Transverse colon (tissue), 4 donors: ENCODE measurements at regions of chr3 and their contacts with region 1.

Region 1: DNA sequence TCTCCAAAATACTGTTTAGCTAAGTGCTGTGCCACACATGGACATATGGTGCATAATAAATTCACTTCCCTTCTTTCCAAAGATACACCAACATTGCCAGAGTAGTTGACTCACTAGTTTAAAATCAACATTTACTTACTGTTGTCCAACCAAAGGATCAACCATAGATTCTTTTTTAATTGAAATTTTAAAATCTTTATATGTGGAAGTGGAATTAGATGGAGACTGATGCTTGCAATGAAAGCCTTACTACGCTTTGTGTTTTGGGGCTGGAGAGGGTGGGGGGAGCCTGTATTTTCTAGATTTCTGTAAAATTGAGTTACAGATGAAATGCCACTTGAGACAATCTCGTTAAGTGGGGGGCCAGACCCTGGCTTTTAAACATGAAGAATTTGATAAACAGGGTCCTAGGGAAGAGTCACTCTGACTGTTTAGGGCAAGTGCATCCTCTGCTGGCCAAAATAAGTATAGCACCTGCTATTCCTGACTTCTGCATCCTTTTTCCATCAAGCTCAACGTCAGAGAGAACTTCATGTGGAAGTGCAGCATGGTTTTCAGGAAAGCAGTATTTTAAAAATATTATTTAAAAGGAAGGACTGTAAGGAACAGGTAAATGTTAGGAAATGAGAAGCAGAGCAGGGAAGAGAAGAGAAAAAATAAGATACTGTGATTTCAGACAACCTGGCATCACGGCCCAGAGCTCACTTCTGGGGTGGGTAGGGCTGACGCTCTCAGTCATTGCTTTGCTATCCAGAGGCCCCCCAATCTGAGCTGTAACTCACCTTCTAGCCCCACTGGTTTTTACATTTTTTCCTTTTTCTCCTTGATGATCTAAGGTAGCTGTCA is 76.7 kb downstream of the BOC start:
- DNase-seq: peak; percentile 53
- H3K4me3 ChIP-seq: no peak overlapping the region
- H3K27ac ChIP-seq: peak overlapping the region; percentile 13 to 72 (median 55)
- H3K4me1 ChIP-seq: peaks cover 0 to 8% (median 3%) of the 10 kb centered on the region in 4 donors
- H3K27me3 ChIP-seq: no peaks in the 10 kb centered on the region
- CTCF ChIP-seq: peak; percentile 97 to 100 (median 99)
- EP300 ChIP-seq: no peak
- POLR2A ChIP-seq: no peak

Region 2: DNA sequence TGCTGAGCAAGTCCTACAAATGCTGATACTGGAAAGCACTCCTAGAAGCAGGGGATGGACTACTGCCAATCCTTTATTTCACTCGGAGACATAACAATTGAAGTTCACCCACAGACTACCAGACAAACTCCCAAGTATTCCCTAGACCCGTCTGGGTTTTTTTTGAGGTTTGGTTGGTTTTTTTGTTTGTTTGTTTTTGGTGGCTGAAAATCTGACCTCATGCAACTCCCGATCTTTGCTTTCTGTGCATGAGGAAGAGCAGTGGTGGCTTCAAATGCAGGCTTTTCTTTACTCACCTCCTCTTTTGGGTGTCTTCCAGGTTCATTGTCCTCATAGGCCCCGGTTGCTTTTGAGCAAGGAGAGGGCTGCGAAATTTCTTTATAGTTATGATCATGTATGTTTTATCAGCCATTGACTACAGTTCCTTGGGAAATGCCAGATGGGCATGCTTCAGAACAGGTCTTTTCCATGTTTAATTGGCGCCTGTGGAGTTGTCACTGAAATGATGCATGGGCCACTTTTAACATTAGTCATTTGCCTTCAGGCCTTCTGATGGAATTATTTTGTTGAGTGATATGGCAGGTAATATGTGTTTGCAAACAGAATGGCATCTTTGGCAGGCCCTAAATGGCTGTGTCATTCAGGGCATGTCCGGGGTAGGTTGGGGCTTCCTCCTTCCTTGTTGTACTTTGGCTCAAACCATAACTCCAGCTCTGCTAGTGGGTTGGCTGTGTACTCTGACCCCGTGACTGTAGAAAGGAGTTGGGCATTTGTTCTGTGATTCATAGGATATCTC is 1611.6 kb before region 1 on chr3:
- in situ Hi-C with region 1: no loop called
- intact Hi-C with region 1: no loop called
- DNase-seq: peak; percentile 81
- H3K4me3 ChIP-seq: peak overlapping the region in 1 of 4 donors; percentile 17
- H3K27ac ChIP-seq: peak overlapping the region; percentile 69 to 81 (median 78)
- H3K4me1 ChIP-seq: peaks cover 3 to 37% (median 30%) of the 10 kb centered on the region in 4 donors
- H3K27me3 ChIP-seq: no peaks in the 10 kb centered on the region
- CTCF ChIP-seq: no peak
- EP300 ChIP-seq: no peak
- POLR2A ChIP-seq: no peak

Region 3: GRCh38 chr3:112642912-112643506 is 645.0 kb before region 1 on chr3:
- in situ Hi-C with region 1: loop called in 1 of 4 experiments (anchors 25 kb)
- intact Hi-C with region 1: no loop called
- DNase-seq: peak; percentile 82
- H3K4me3 ChIP-seq: peak overlapping the region in 1 of 4 donors; percentile 18
- H3K27ac ChIP-seq: peak overlapping the region in 1 of 4 donors; percentile 0
- H3K4me1 ChIP-seq: peaks cover 0 to 35% (median 0%) of the 10 kb centered on the region in 4 donors
- H3K27me3 ChIP-seq: peaks cover 6% of the 10 kb centered on the region
- CTCF ChIP-seq: peak; percentile 61 to 71 (median 69)
- EP300 ChIP-seq: no peak
- POLR2A ChIP-seq: no peak

Region 4: DNA sequence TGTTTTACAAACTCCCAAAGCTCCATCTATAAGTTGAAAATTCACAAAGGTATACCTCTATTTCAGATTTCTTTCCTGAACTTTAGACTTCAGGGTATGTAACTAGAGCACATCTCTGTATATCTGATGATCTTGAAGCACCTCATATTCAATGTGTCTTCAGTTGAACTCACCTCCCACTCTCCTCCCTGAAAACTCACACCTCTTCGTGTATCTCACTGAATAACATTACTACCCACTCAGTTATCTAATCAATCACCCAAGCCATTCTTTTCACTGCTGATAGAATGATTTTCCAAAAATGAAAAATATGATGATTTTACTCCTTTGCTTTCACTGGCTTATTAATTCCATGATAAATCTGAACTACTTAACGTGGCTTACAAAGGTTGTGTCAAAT is 244.3 kb before region 1 on chr3:
- in situ Hi-C with region 1: loop called in 1 of 4 experiments (anchors 5 kb)
- intact Hi-C with region 1: no loop called
- DNase-seq: no peak
- H3K4me3 ChIP-seq: no peak overlapping the region
- H3K27ac ChIP-seq: no peak overlapping the region
- H3K4me1 ChIP-seq: no peaks in the 10 kb centered on the region
- H3K27me3 ChIP-seq: no peaks in the 10 kb centered on the region
- CTCF ChIP-seq: no peak
- EP300 ChIP-seq: no peak
- POLR2A ChIP-seq: no peak

Region 5: GRCh38 chr3:113051302-113051711 is 236.7 kb before region 1 on chr3:
- in situ Hi-C with region 1: loop called in 3 of 4 experiments (anchors 5 to 10 kb)
- intact Hi-C with region 1: loop called (anchors 2 kb)
- DNase-seq: peak; percentile 89
- H3K4me3 ChIP-seq: no peak overlapping the region
- H3K27ac ChIP-seq: peak overlapping the region; percentile 48 to 79 (median 64)
- H3K4me1 ChIP-seq: peaks cover 0 to 9% (median 0%) of the 10 kb centered on the region in 4 donors
- H3K27me3 ChIP-seq: no peaks in the 10 kb centered on the region
- CTCF ChIP-seq: peak; percentile 92 to 96 (median 95)
- EP300 ChIP-seq: no peak
- POLR2A ChIP-seq: no peak

Region 6: GRCh38 chr3:113136071-113136470 is 152.0 kb before region 1 on chr3:
- in situ Hi-C with region 1: loop called in 3 of 4 experiments (anchors 10 kb)
- intact Hi-C with region 1: loop called (anchors 5 kb)
- DNase-seq: no peak
- H3K4me3 ChIP-seq: no peak overlapping the region
- H3K27ac ChIP-seq: peak overlapping the region in 2 of 4 donors; percentile 10 to 41
- H3K4me1 ChIP-seq: peaks cover 0 to 5% (median 3%) of the 10 kb centered on the region in 4 donors
- H3K27me3 ChIP-seq: no peaks in the 10 kb centered on the region
- CTCF ChIP-seq: peak; percentile 32 to 52 (median 37)
- EP300 ChIP-seq: no peak
- POLR2A ChIP-seq: no peak

Region 7: DNA sequence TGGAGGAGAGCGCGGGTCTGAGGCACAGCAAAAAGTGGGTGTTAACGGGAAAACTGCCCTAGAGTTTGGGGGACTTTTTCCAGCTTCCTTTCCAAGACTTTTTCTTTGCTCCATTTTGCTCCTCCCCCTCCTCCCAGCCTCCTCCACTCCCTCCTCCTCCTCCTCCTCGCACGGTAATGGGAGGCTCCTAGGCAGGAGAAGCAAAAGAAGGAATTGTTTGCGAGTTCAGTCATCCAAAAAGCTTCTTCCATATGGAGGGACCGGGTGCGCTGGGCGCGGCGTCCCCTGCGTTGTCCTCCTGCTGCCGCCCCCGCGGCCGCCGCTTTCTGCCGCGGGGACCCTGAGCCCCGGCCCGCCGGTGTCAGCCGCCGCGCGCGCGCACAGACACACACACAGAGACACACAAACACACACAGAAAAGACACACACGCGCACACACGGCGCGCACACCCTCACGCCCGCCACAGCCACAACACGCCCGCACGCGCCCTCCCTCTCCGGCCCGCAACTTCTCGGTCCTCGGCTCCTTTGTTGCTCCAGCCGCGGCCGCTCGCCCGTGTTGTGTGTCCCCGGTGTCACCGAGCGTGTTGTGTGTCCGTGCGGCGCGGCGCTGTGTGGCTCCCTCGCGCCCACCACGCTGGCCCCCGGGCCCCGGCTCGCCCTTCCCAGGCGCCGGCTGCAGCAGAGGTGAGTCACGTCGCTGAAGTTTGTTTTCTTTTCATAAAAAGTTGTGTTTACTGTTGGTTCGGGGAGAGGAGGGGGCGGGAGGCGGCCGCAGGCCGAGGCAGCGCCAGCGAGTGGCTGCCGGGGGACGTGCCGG is 76.5 kb before region 1 on chr3 and contains the start of gene BOC:
- in situ Hi-C with region 1: no loop called
- intact Hi-C with region 1: loop called (anchors 5 kb)
- DNase-seq: no peak
- H3K4me3 ChIP-seq: peak within 1 kb of the TSS; percentile 63 to 85 (median 67)
- H3K27ac ChIP-seq: peak within 1 kb of the TSS; percentile 84 to 96 (median 90)
- H3K4me1 ChIP-seq: peaks cover 0 to 11% (median 5%) of the 10 kb centered on the region in 4 donors
- H3K27me3 ChIP-seq: peaks cover 50% of the 10 kb centered on the region
- CTCF ChIP-seq: no peak
- EP300 ChIP-seq: no peak
- POLR2A ChIP-seq: no peak
- total RNA-seq, gene BOC: 15.2 to 77.4 (median 45.4) TPM

Region 8: DNA sequence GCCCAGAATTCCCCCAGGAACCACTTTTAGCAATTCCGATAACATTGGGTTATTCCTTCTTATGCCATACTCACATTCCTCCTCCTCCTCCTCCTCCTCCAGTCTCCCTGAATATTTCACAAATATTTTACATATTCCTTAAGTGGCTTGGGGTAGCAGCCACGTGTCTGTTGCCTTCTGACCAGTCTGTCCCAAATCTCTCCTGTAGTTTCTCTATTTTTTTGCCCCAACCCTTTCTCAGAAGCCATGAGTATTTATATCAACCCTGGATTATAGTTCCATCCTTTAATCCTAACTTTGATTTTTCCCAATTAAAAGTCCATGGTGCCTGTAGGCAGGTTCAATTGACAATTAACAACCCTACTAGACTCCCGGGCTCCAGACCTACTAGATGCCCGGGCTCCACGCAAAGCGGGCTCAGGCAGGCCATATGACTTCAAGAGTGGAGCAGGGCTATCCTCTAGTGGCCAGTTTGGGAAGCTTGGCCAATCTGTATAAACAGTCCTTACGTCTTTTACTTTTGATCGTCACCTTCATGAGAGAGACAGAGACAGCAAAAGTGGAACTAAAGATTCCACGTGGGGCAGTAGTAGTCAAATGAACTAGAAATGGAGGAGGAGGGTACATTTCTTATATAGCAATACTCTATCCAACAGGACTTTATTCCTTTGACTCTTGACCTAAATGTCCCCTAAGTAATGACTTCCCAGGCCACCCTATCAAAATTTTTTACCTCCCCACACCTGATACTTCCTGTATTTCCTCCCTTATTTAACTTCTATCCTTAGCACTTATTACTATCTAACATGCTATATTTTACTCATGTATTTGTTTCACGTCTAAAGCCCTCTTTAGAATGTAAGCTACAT is 338.7 kb after region 1 on chr3:
- in situ Hi-C with region 1: no loop called
- intact Hi-C with region 1: loop called (anchors 10 kb)
- DNase-seq: peak; percentile 57
- H3K4me3 ChIP-seq: no peak overlapping the region
- H3K27ac ChIP-seq: peak overlapping the region in 1 of 4 donors; percentile 10
- H3K4me1 ChIP-seq: peaks cover 10 to 41% (median 26%) of the 10 kb centered on the region in 4 donors
- H3K27me3 ChIP-seq: no peaks in the 10 kb centered on the region
- CTCF ChIP-seq: peak; percentile 73 to 82 (median 80)
- EP300 ChIP-seq: no peak
- POLR2A ChIP-seq: no peak